WTC11 (cell line): ENCODE measurements at regions of chr2 and their contacts with region 1.

Region 1: DNA sequence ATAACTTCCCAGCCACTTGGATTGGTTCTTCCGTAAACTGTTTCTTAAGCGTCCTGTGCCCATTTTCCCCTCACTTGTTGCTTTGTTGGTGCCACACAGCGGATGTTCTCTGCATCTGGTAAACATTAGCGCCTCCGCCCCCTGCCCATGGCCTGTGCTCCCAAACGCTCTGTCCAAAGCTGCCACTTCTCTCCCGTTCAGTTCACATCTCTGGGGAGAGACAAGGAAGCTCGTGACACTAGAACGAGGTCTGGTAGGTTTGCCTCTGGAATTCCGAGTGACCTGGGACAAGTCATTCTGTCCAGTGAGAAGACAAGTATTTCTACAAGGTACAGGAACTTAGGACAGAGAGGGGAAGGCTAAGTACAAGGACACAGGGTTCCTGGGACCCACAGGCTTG is 9.4 kb downstream of the COPS9 start:
- DNase-seq: no peak
- ATAC-seq: no peak
- H3K4me3 Mint-ChIP-seq: no peak overlapping the region
- H3K27ac Mint-ChIP-seq: no peak overlapping the region
- H3K4me1 Mint-ChIP-seq: no peaks in the 10 kb centered on the region
- H3K27me3 Mint-ChIP-seq: no peaks in the 10 kb centered on the region
- CTCF ChIP-seq: no peak

Region 2: DNA sequence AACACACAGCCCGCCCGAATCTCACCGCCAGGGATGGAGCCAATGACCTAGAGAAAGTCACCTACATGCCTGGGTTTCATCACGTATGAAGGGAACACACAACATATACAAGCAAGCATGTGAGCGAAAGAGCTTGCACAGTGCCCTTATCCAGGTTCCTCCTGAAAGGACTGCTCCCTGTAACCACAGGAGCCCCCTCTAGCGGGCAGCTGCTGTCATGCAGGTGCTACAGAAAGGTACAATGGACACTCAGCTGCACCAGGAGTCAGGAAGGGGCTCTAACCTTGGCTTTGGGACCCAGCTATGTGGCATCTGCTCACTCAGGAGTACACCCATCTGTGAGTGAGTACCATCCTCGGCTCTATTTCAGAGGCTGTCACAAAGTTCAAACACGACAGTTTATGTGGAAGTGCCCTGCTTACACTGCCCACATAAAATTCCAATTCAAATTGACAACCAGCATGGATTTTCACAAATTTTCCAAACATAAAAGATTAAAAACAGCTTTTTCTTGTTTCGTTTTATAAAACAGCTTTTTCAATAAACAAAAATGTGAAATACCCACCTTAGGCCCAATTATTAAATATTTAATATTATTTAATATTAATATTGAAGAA is 105.1 kb before region 1 on chr2:
- CTCF ChIA-PET with region 1: no interaction called
- POLR2A ChIA-PET with region 1: interaction called, 11 read pairs
- DNase-seq: peak; percentile 93
- ATAC-seq: peak; percentile 77
- H3K4me3 Mint-ChIP-seq: no peak overlapping the region
- H3K27ac Mint-ChIP-seq: no peak overlapping the region
- H3K4me1 Mint-ChIP-seq: peaks cover 10% of the 10 kb centered on the region
- H3K27me3 Mint-ChIP-seq: no peaks in the 10 kb centered on the region; the same call in 1 of the 2 replicates
- CTCF ChIP-seq: peak; percentile 75